ENCODE measurements at regions of chr5 and their contacts with region 1.

Region 1: DNA sequence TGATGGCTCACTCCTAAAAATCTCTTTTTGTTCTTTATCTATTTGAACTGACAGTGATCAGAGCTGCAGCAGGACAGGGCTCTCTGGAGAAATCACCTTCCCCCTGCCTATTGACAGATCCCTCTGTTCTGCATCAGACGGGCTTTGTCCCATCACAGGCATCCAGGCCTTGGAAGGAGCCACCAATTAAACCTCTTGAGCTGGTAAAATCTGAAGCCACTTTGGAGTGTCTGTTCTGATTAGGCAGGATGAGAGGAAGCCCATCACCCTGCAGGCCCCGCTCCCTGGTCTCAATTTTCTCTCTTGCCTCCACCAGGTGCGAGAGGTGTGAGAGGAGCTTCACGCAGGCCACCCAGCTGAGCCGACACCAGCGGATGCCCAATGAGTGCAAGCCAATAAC is 97.7 kb downstream of the PRDM6 start:
- DNase-seq: no peak
- H3K4me3 ChIP-seq: no peak overlapping the region
- H3K27ac ChIP-seq: no peak overlapping the region
- H3K4me1 ChIP-seq: no peaks in the 10 kb centered on the region
- H3K27me3 ChIP-seq: no peaks in the 10 kb centered on the region
- CTCF ChIP-seq: no peak
- POLR2A ChIP-seq: no peak

Region 2: GRCh38 chr5:122639864-122640263 is 546.9 kb before region 1 on chr5:
- intact Hi-C with region 1: loop called (anchors 5 kb)
- DNase-seq: no peak
- H3K4me3 ChIP-seq: no peak overlapping the region
- H3K27ac ChIP-seq: no peak overlapping the region
- H3K4me1 ChIP-seq: no peaks in the 10 kb centered on the region
- H3K27me3 ChIP-seq: no peaks in the 10 kb centered on the region
- CTCF ChIP-seq: no peak
- POLR2A ChIP-seq: no peak

Measured in breast epithelium (tissue), 4 donors.